ENCODE measurements at regions of chr9 and their contacts with region 1.

Region 1: GRCh38 chr9:88991066-88992034 is at the start of gene S1PR3:
- DNase-seq: no peak
- ATAC-seq: peak; percentile 89
- H3K4me3 ChIP-seq: peak within 1 kb of the TSS; percentile 59 to 67
- H3K27ac ChIP-seq: 0 out of 2 replicates have a peak within 1 kb of the TSS, but pooled peaks have one; percentile 54
- H3K4me1 ChIP-seq: peaks cover 2% of the 10 kb centered on the region
- H3K27me3 ChIP-seq: no peaks in the 10 kb centered on the region
- CTCF ChIP-seq: peak; percentile 12
- total RNA-seq, gene S1PR3: 8.1 TPM

Region 2: DNA sequence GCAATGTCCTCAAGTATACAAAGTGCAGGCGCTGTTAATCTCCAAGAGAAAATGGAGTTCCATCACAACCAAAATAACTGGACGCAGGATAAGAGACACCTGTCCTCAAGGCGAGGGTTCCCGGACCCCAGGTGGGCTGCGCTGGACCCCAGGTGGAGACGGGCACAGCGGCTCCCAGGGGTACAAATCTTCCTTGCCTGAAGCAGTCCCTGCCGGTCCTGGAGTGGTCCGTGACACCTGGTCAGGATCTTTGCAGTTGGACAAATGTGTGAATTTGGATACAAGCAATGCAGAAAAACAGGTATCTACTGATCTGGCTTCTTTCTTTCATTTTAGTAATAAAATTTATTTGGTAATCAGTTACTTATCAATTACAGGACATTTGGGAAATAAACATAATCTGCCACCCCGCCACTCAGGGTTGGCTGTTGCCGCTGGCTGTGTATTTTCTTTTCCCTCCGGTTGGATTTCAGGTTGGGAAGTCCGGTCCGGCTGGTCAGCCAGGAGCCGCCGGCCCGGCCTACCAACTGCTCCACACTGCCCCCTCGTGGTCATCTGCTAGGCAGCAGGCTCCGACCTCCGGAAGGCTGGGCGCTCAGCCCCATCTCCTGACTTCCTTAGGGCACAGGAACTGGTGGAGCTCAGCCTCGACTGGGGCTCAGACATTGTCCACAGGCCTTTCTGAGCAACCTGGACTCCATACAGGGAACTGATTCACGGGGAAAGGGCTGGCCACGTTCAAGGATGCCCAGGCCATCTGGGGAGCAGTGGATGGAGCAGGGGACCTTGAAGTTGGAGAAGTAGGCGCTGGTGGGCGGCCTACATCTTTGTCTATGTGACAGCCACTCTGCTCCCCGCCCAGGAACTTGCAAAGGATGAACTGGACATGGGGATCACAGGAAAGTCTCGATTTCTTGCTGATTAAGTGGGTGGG is 413.0 kb before region 1 on chr9:
- CTCF ChIA-PET with region 1: interaction called, 14 read pairs
- POLR2A ChIA-PET with region 1: no interaction called
- in situ Hi-C with region 1: no loop called
- intact Hi-C with region 1: no loop called
- DNase-seq: peak; percentile 28
- ATAC-seq: peak; percentile 96
- H3K4me3 ChIP-seq: no peak overlapping the region
- H3K27ac ChIP-seq: peak overlapping the region; percentile 7; the same call in 1 of the 2 replicates
- H3K4me1 ChIP-seq: no peaks in the 10 kb centered on the region
- H3K27me3 ChIP-seq: no peaks in the 10 kb centered on the region
- CTCF ChIP-seq: peak; percentile 90